WTC11 (cell line): ENCODE measurements at regions of chr22 and their contacts with region 1.

Region 1: DNA sequence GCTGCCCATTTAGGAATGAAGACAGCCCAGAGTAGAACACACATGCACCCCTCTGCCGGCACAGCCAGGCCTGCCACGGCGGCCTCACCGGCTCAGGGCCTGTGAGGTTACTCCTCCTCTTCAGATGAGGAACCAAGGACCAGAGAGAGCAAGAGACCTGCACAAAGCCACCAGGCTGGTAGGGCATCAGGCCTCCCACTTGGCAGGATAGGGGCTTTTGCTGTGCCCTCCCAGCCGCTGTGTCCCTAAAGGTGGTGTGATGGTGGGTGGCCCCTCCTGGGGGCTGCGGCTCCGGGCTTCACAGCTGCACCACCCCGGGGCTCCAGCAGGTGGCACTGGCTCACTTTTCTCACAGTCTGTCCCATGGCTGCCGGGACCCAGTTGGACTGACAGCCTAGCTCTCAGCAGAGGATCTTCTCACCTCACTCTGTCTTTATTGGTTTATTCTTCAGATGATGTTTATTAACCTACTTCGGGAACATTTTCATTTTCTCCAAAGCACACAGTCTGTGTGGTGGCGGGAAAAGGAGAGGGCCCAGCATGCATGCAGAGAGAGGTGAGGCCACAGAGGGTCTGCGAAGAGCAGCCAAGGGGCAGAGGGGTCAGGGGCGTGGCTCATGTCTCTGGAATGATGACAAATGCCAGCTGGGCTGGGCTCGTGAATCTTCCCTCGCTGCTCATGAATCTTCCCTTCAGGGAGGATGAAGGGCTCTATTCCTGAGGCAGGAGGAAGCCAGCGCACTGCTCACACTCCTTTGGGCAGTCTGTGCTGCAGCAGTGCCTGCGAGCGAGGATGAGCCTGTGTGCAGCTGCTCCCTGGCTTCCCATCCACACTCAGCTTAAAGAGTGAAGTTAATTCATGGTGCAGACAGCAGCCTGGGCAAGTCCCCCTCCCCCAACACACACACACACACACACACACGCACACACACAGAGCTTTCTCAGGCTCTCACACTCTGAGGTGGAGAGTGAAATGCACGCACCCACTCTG is 101.1 kb upstream of the PITPNB start:
- DNase-seq: peak; percentile 89
- ATAC-seq: peak; percentile 91
- H3K4me3 Mint-ChIP-seq: no peak overlapping the region
- H3K27ac Mint-ChIP-seq: peak overlapping the region; percentile 80
- H3K4me1 Mint-ChIP-seq: peaks cover 8% of the 10 kb centered on the region
- H3K27me3 Mint-ChIP-seq: no peaks in the 10 kb centered on the region
- CTCF ChIP-seq: peak; percentile 94

Region 2: GRCh38 chr22:27990879-27991278 is 29.3 kb before region 1 on chr22:
- CTCF ChIA-PET with region 1: interaction called, 11 read pairs
- POLR2A ChIA-PET with region 1: no interaction called
- DNase-seq: peak; percentile 83
- ATAC-seq: peak; percentile 89
- H3K4me3 Mint-ChIP-seq: no peak overlapping the region
- H3K27ac Mint-ChIP-seq: no peak overlapping the region; the same call in 1 of the 2 replicates
- H3K4me1 Mint-ChIP-seq: peaks cover 20% of the 10 kb centered on the region
- H3K27me3 Mint-ChIP-seq: no peaks in the 10 kb centered on the region
- CTCF ChIP-seq: peak; percentile 55; the same call in 1 of the 2 replicates

Region 3: DNA sequence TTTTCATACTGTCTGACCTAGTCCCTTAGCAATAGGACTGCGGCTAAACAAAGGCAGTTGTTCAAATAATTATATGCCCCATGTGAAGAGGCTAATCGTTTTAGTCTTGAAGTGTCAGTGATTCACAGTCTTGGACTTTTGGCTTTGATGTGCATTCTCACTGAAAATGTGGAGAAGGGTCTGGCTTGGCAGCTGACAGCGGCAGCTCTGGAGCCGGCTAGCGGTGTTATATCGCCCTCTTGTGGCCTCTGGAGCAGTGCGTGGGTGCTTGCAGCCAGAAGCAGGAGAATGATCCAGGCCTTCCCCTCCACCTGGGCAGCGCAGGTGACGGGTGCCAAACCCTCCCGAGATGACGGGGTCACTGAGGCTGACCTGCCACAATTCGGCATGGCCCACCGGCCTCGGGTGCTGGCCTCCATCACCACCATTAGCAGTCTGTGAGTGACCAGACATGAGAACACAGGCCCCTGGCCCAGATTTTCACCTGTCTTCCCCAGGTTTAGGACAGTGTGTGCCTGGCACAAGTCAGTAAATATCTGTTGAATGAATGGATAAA is 10.8 kb before region 1 on chr22:
- CTCF ChIA-PET with region 1: interaction called, 12 read pairs
- POLR2A ChIA-PET with region 1: no interaction called
- DNase-seq: peak; percentile 88
- ATAC-seq: peak; percentile 87
- H3K4me3 Mint-ChIP-seq: no peak overlapping the region
- H3K27ac Mint-ChIP-seq: no peak overlapping the region
- H3K4me1 Mint-ChIP-seq: no peaks in the 10 kb centered on the region
- H3K27me3 Mint-ChIP-seq: no peaks in the 10 kb centered on the region
- CTCF ChIP-seq: peak; percentile 93

Region 4: DNA sequence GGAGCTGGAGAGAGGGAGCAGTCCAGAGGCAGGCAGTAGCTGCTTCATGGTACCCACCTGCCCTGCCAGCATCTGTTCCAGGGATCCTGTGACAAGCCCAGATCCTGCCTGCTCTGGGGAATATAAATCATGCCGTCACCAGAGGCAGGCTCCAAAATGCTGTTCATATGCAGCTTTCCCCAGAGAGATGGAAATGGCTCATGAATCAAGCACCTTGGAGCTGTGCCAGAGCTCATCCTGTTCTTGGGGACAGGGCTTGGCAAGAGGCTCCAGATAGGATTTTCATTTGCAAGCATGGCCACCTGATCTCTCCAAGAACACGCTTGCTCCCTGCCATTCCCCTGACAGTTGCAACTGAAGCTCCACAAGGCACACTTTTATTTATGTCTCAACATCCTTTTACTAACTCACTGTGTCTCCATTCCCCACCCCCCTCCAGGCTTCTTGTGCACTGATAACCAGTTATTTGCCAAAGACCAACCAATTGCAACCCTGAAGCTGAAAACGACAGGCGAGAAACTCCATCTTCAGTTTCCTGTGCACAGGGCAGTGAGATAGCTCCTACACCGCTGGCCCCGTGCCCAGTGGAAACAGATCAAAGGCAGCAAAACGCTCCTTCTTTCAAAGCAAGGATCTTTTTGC is 14.7 kb after region 1 on chr22:
- CTCF ChIA-PET with region 1: interaction called, 18 read pairs
- POLR2A ChIA-PET with region 1: no interaction called
- DNase-seq: no peak
- ATAC-seq: no peak
- H3K4me3 Mint-ChIP-seq: no peak overlapping the region
- H3K27ac Mint-ChIP-seq: no peak overlapping the region
- H3K4me1 Mint-ChIP-seq: no peaks in the 10 kb centered on the region
- H3K27me3 Mint-ChIP-seq: peaks cover 10% of the 10 kb centered on the region
- CTCF ChIP-seq: no peak

Region 5: GRCh38 chr22:28051787-28052356 is 31.7 kb after region 1 on chr22:
- CTCF ChIA-PET with region 1: interaction called, 52 read pairs
- POLR2A ChIA-PET with region 1: no interaction called
- DNase-seq: peak; percentile 85
- ATAC-seq: peak; percentile 86
- H3K4me3 Mint-ChIP-seq: no peak overlapping the region
- H3K27ac Mint-ChIP-seq: no peak overlapping the region
- H3K4me1 Mint-ChIP-seq: peaks cover 3% of the 10 kb centered on the region
- H3K27me3 Mint-ChIP-seq: no peaks in the 10 kb centered on the region
- CTCF ChIP-seq: peak; percentile 76

Region 6: GRCh38 chr22:28259774-28260312 is 239.7 kb after region 1 on chr22:
- CTCF ChIA-PET with region 1: no interaction called
- POLR2A ChIA-PET with region 1: no interaction called
- DNase-seq: no peak
- ATAC-seq: no peak
- H3K4me3 Mint-ChIP-seq: no peak overlapping the region
- H3K27ac Mint-ChIP-seq: no peak overlapping the region
- H3K4me1 Mint-ChIP-seq: 0 out of 2 replicates have a peak, but pooled peaks cover 4% of the 10 kb centered on the region
- H3K27me3 Mint-ChIP-seq: no peaks in the 10 kb centered on the region
- CTCF ChIP-seq: no peak

Region 7: DNA sequence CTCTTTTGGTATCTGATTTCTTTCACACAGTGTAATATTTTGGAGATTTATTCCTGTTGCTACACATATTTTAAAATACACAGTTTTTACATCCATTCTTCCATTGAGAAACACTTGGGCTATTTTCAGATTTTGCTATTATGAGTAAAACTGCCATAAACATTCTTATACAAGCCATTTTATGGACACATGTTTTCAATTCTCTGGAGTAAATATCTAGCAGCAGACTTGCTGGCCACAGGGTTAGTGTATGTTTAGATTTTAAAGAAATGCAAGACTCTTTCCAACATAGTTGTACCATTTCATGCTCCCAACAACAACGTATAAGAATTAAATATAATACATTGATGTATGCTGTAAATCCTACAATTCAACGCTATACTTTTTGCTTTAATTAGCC is 259.7 kb after region 1 on chr22:
- CTCF ChIA-PET with region 1: interaction called, 10 read pairs
- POLR2A ChIA-PET with region 1: no interaction called
- DNase-seq: no peak
- ATAC-seq: no peak
- H3K4me3 Mint-ChIP-seq: no peak overlapping the region
- H3K27ac Mint-ChIP-seq: no peak overlapping the region
- H3K4me1 Mint-ChIP-seq: peaks cover 30% of the 10 kb centered on the region
- H3K27me3 Mint-ChIP-seq: no peaks in the 10 kb centered on the region
- CTCF ChIP-seq: no peak

Region 8: GRCh38 chr22:28442264-28442710 is 422.1 kb after region 1 on chr22:
- CTCF ChIA-PET with region 1: interaction called, 22 read pairs
- POLR2A ChIA-PET with region 1: interaction called, 3 read pairs
- DNase-seq: peak; percentile 85
- ATAC-seq: peak; percentile 85
- H3K4me3 Mint-ChIP-seq: peak overlapping the region; percentile 96
- H3K27ac Mint-ChIP-seq: 0 out of 2 replicates have a peak overlapping the region, but pooled peaks have one; percentile 33
- H3K4me1 Mint-ChIP-seq: peaks cover 10% of the 10 kb centered on the region
- H3K27me3 Mint-ChIP-seq: no peaks in the 10 kb centered on the region
- CTCF ChIP-seq: peak; percentile 41; the same call in 1 of the 2 replicates